Common myeloid progenitor, CD34-positive (primary cell): ENCODE measurements at regions of chr22 and their contacts with region 1.

Region 1: DNA sequence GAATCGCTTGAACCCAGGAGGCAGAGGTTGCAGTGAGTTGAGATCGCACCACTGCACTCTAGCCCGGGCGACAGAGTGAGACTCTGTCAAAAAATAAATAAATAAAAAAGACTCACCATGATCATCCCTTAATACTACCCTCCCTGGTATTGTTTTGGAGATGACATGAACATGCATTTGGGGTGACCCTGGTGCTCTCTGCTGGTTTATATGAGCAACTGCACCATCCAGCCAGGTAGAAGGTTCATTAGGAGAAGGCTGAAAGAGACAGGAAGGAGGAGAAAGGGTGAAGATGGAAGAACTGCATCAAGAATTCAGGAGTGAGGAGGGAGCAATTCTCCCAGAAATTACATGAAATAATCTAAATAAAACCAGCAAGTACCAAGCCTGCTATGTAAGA is 37.8 kb downstream of the SLC5A1 start:
- DNase-seq: peak; percentile 30 to 67 (median 60)
- H3K4me3 ChIP-seq: no peak overlapping the region
- H3K27ac ChIP-seq: no peak overlapping the region
- H3K4me1 ChIP-seq: no peaks in the 10 kb centered on the region
- H3K27me3 ChIP-seq: peaks cover 0 to 6% (median 5%) of the 10 kb centered on the region in 5 experiments

Region 2: DNA sequence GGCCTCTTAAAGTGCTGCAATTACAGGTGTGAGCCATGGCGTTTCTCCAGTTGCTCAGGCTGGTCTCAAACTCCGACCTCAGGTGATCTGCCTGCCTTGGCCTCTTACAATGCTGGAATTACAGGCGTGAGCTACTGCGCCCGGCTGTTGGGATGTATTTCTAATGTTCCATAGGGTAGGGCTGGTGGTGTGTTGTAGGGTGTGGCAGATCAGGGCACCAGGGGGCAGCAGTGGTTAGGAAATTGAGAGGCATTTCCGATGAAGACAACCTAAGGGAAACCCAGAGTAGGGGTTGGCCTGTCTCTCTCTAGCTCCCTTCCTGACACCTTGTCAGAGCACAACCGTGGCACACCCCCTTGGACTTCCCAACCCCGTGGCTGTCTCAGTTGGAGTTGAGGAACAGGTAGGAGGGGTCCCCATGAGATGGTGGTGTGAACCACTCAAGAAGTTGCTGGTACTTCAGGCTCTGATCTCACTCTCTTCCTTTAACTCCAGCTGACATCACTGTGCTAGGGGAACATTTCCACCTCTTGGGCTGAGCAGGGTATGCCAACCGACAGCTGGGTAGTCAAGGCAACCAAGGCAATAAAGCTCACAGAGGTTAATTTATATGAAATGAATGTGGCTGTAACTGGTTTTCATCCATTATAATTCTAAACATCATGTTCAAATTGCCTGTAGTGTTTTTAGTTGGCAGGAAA is 103.6 kb before region 1 on chr22:
- CTCF ChIA-PET with region 1: interaction called, 28 read pairs
- POLR2A ChIA-PET with region 1: no interaction called
- DNase-seq: peak; percentile 61 to 78 (median 77)
- H3K4me3 ChIP-seq: no peak overlapping the region
- H3K27ac ChIP-seq: no peak overlapping the region
- H3K4me1 ChIP-seq: peaks cover 0 to 2% (median 0%) of the 10 kb centered on the region in 4 experiments
- H3K27me3 ChIP-seq: no peaks in the 10 kb centered on the region

Region 3: GRCh38 chr22:32066820-32067219 is 14.1 kb before region 1 on chr22:
- CTCF ChIA-PET with region 1: no interaction called
- POLR2A ChIA-PET with region 1: no interaction called
- DNase-seq: no peak
- H3K4me3 ChIP-seq: no peak overlapping the region
- H3K27ac ChIP-seq: no peak overlapping the region
- H3K4me1 ChIP-seq: no peaks in the 10 kb centered on the region
- H3K27me3 ChIP-seq: peaks cover 0 to 10% (median 3%) of the 10 kb centered on the region in 5 experiments